Activated CD8-positive, alpha-beta T cell treated with anti-CD3 and anti-CD28 coated beads for 36 hours (primary cell): ENCODE measurements at regions of chr6 and their contacts with region 1.

Region 1: DNA sequence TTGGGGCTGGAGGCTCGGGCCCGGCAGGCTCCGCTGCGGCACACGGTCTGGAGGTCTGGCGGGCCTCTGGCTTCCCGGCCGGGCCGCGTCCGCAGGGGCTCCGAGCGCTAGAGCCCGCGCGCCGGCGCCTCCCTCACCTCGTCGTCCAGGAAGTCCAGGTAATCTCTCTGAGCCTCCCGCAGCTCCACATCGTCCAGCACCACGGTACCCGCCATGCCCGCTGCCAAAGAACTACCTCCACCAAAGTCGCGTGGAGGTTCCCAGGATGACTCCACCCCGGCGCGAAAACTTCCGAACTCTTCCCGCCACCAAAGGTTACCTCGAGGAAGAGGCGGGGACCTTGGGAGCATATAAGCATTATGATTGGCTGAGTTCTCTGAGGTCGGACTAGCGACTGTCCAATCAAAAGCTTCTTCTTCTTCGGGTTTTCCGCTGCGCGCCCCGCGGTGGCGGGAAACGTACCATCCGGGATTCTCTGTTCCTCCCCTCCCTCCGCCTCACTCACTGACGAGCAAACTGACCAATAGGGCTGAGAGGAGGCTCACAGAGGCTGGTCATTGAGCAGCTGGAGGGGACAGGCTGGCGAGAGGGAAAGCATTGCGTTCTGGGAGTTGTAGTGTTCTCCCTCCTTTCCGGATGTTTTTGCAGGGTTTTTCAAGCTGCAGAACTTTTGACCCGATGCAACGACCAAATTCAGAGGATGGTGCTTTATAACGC is at the start of gene MCM3:
- DNase-seq: peak; percentile 99
- ATAC-seq: peak; percentile 97
- H3K4me3 Mint-ChIP-seq: no peak within 1 kb of the TSS
- H3K27ac Mint-ChIP-seq: peak within 1 kb of the TSS; percentile 64
- H3K4me1 Mint-ChIP-seq: peaks cover 52% of the 10 kb centered on the region
- H3K27me3 Mint-ChIP-seq: no peaks in the 10 kb centered on the region
- CTCF ChIP-seq: no peak
- total RNA-seq, gene MCM3: 291 to 293 TPM

Region 2: DNA sequence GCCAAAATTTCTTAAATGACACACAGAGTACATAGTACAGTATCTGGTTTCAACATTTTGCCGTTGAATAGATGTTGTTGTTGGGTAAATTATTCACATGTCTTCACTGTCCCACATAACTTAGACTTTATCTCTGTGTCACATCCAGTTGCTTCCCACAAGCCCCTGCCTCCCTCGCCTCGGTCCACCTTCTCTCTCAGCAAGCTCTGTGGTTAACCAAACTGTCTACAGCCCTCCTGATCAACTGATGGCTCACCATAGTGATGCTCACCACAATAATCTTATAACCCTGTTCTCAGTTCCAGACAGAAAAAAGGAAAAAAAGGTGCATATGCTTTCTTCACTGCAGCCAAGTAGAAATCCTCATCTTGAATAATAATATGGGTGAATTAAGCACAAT is 63.3 kb before region 1 on chr6:
- CTCF ChIA-PET with region 1: no interaction called
- POLR2A ChIA-PET with region 1: no interaction called
- intact Hi-C with region 1: no loop called
- DNase-seq: peak; percentile 71
- ATAC-seq: peak; percentile 90
- H3K4me3 Mint-ChIP-seq: no peak overlapping the region
- H3K27ac Mint-ChIP-seq: no peak overlapping the region
- H3K4me1 Mint-ChIP-seq: peaks cover 9% of the 10 kb centered on the region
- H3K27me3 Mint-ChIP-seq: peaks cover 40% of the 10 kb centered on the region
- CTCF ChIP-seq: no peak

Region 3: GRCh38 chr6:52263709-52264540 is 20.7 kb before region 1 on chr6:
- CTCF ChIA-PET with region 1: interaction called, 63 read pairs
- POLR2A ChIA-PET with region 1: interaction called, 36 read pairs
- intact Hi-C with region 1: no loop called
- DNase-seq: peak; percentile 78
- ATAC-seq: peak; percentile 83
- H3K4me3 Mint-ChIP-seq: no peak overlapping the region
- H3K27ac Mint-ChIP-seq: peak overlapping the region; percentile 31
- H3K4me1 Mint-ChIP-seq: peaks cover 12% of the 10 kb centered on the region
- H3K27me3 Mint-ChIP-seq: no peaks in the 10 kb centered on the region
- CTCF ChIP-seq: peak; percentile 90

Region 4: DNA sequence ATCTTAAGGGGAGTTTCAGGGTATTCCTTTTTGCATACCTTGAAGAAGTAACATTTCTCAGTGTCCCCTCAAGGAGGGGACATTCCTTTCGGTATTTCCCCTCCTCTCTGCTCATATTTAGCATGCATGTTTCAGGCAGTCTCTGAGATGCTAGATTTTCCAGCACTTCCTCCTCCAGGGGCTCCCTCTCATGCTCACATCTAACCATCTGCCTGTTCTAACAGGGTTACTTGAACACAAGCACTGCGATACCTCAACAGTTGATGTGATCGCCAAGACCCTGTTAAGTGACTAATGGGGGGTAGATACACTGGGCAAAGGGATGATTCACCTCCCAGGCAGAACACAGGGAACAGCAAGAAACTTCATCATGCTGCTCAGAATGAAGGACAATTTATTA is 12.8 kb after region 1 on chr6:
- CTCF ChIA-PET with region 1: interaction called, 16 read pairs
- POLR2A ChIA-PET with region 1: interaction called, 10 read pairs
- intact Hi-C with region 1: no loop called
- DNase-seq: no peak
- ATAC-seq: peak; percentile 40
- H3K4me3 Mint-ChIP-seq: no peak overlapping the region
- H3K27ac Mint-ChIP-seq: peak overlapping the region; percentile 84
- H3K4me1 Mint-ChIP-seq: peaks cover 40% of the 10 kb centered on the region
- H3K27me3 Mint-ChIP-seq: no peaks in the 10 kb centered on the region
- CTCF ChIP-seq: no peak

Region 5: DNA sequence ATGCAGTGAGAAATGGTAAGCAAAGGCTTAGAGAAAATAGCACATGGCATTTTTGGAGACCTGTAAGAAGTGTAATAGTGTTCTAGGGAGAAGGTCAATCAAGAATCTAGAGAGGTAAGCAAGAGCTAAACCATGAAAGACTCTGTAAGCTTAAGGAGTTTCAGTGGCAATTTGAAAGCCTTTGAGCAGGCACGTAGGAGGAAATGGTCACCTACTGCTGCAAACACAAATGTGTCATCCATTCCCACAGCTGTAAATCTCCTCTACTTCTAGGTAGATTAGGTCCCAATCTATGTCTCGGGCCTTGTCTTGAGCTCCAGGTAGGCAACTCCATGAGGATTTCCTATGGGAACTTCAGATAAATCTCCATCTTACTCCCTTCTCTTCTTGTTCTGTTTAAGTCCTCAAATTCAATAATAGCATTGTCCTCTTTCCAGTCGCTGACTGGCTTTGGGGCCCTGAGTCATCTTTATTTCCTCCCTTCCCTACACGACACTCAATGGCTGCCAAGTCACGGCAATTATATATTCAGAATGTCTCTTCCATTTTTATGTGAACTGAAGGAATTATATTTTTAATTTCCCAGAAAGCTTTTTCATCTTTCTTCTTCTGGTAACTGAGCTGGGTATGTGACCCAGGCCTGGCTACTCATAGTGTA is 53.1 kb after region 1 on chr6:
- CTCF ChIA-PET with region 1: interaction called, 10 read pairs
- POLR2A ChIA-PET with region 1: interaction called, 3 read pairs
- intact Hi-C with region 1: no loop called
- DNase-seq: peak; percentile 40
- ATAC-seq: peak; percentile 73
- H3K4me3 Mint-ChIP-seq: no peak overlapping the region
- H3K27ac Mint-ChIP-seq: peak overlapping the region; percentile 84
- H3K4me1 Mint-ChIP-seq: peaks cover 67% of the 10 kb centered on the region
- H3K27me3 Mint-ChIP-seq: no peaks in the 10 kb centered on the region
- CTCF ChIP-seq: no peak

Region 6: GRCh38 chr6:52389626-52390360 is 105.2 kb after region 1 on chr6:
- CTCF ChIA-PET with region 1: interaction called, 39 read pairs
- POLR2A ChIA-PET with region 1: interaction called, 51 read pairs
- intact Hi-C with region 1: no loop called
- DNase-seq: peak; percentile 77
- ATAC-seq: peak; percentile 64
- H3K4me3 Mint-ChIP-seq: peak overlapping the region; percentile 54
- H3K27ac Mint-ChIP-seq: peak overlapping the region; percentile 93
- H3K4me1 Mint-ChIP-seq: peaks cover 86% of the 10 kb centered on the region
- H3K27me3 Mint-ChIP-seq: no peaks in the 10 kb centered on the region
- CTCF ChIP-seq: no peak

Region 7: DNA sequence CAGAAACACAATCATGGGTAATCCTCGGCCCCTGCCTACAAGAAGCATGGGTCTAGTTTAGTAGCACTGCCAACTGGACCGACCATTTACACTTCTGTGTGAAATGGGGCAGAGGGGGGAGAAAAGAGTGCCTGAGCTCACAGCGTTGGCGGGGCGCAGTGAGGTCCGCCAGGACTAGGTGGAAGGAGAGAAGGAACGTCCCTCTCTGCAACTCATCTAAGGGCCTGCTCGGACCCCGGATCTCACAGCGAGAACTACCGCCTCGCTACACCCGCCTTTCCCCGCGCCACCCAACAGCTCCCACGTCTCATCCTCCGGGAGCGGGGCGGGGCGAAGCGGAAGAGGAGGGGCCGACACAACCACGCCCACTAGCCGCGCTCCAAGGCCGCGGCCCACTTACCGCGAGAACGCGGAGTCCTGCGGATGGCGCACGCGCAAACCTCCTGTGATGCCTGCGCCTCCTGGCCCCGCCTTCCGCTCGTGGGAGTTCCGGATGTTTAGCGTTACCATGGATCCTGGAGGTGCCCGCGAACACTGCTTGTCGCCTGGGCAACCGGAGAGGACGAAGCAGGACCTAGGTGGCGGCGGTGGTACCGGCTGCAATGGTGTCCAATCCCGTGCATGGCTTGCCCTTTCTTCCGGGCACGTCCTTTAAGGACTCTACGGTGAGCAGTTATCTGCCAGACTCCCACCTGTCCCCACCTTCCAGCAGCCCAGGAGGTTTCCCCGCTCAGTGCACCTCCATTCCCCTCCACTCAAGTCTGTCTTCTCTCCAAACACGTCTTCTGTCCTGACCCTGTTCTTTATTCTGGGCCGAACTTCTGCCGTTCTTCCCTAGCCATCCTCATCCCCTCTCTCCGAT is 135.4 kb after region 1 on chr6 and contains the start of gene EFHC1:
- CTCF ChIA-PET with region 1: interaction called, 65 read pairs
- POLR2A ChIA-PET with region 1: interaction called, 12 read pairs
- intact Hi-C with region 1: no loop called
- DNase-seq: peak; percentile 99
- ATAC-seq: peak; percentile 94
- H3K4me3 Mint-ChIP-seq: no peak within 1 kb of the TSS
- H3K27ac Mint-ChIP-seq: no peak within 1 kb of the TSS
- H3K4me1 Mint-ChIP-seq: peaks cover 27% of the 10 kb centered on the region
- H3K27me3 Mint-ChIP-seq: no peaks in the 10 kb centered on the region
- CTCF ChIP-seq: no peak
- total RNA-seq, gene EFHC1: 1.9 to 2.1 TPM

Region 8: GRCh38 chr6:52664186-52664990 is 379.8 kb after region 1 on chr6:
- CTCF ChIA-PET with region 1: interaction called, 10 read pairs
- POLR2A ChIA-PET with region 1: no interaction called
- intact Hi-C with region 1: loop called (anchors 10 kb)
- DNase-seq: peak; percentile 86
- ATAC-seq: peak; percentile 97
- H3K4me3 Mint-ChIP-seq: no peak overlapping the region
- H3K27ac Mint-ChIP-seq: no peak overlapping the region
- H3K4me1 Mint-ChIP-seq: no peaks in the 10 kb centered on the region
- H3K27me3 Mint-ChIP-seq: no peaks in the 10 kb centered on the region
- CTCF ChIP-seq: no peak

Region 9: GRCh38 chr6:53080813-53081212 is 796.2 kb after region 1 on chr6:
- CTCF ChIA-PET with region 1: no interaction called
- POLR2A ChIA-PET with region 1: no interaction called
- intact Hi-C with region 1: no loop called
- DNase-seq: no peak
- ATAC-seq: no peak
- H3K4me3 Mint-ChIP-seq: no peak overlapping the region
- H3K27ac Mint-ChIP-seq: no peak overlapping the region
- H3K4me1 Mint-ChIP-seq: no peaks in the 10 kb centered on the region
- H3K27me3 Mint-ChIP-seq: no peaks in the 10 kb centered on the region
- CTCF ChIP-seq: no peak